ENCODE measurements at regions of chr6 and their contacts with region 1.

Region 1: DNA sequence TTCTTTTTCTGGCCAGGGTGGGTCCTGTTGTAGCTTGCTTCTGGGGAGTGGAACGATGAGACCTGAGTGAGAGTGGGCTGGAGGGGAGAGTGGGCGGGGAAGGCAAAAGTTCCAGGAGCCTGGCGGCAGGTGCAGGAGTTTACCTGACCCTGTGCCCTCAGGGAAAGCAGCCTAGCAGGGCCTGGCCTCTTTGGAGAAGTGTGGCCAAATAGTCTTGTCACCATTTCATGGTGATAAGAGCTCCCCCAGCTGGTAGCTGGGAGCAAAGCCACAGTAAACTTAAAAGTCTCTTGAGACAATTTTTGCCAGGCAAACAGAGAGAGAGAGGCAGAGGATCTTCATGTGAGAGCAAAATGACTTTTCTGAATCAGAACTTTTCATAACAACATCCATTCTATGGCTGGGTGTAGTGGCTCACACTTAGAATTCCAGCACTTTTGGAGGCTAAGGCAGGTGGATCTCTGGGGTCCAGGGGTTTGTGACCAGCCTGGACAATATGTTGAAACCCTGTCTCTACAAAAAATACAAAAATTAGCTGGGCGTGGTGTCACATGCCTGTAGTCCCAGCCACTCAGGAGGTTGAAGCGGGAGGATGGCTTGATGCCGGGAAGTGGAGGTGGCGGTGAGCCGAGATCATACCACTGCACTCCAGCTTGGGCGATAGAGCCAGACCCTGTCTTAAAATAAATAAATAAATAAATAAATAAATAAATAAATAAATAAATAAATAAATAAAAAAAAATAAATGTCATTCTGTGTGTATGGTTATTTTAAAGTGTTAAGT is 161.8 kb upstream of the SCGN start:
- DNase-seq: peak; percentile 48
- H3K4me3 ChIP-seq: peak overlapping the region in 1 of 2 experiments; percentile 16; a peak in 1 of 4 replicates
- H3K27ac ChIP-seq: no peak overlapping the region; a peak in 1 of 4 replicates
- H3K4me1 ChIP-seq: peaks cover 0 to 11% of the 10 kb centered on the region in 2 experiments; a peak in 2 of 4 replicates
- H3K27me3 ChIP-seq: no peaks in the 10 kb centered on the region
- CTCF ChIP-seq: peak; percentile 86
- EP300 ChIP-seq: no peak
- RAD21 ChIP-seq: peak; percentile 93

Region 2: GRCh38 chr6:25112207-25112874 is 377.9 kb before region 1 on chr6:
- CTCF ChIA-PET with region 1: no interaction called
- POLR2A ChIA-PET with region 1: no interaction called
- DNase-seq: no peak
- H3K4me3 ChIP-seq: no peak overlapping the region
- H3K27ac ChIP-seq: no peak overlapping the region
- H3K4me1 ChIP-seq: no peaks in the 10 kb centered on the region; a peak in 1 of 4 replicates
- H3K27me3 ChIP-seq: no peaks in the 10 kb centered on the region
- CTCF ChIP-seq: no peak
- EP300 ChIP-seq: no peak
- RAD21 ChIP-seq: no peak

Region 3: DNA sequence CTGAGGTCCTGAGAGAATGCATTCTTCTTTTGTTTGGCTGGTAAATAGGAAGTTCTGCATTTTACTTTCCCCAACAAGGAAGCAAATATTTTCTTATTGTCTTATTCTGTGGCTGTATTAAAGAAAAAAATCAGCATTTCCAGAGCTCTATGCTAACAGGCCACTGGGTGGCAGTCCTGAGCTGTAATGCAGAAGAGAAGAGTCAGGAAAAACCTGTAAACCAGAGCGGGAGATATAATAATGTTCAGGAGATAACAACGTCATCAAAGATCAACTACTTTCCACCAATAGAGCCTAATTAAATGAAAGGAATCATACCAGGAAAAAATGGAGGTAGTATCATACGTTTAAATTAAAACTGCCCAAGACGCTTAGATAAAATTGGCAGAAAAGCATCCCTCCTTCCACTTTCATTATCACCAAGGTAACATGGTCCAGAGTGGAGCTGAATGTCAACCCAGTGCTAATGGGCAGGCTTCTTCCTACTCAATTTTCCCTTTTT is 266.7 kb before region 1 on chr6:
- CTCF ChIA-PET with region 1: interaction called, 28 read pairs
- POLR2A ChIA-PET with region 1: interaction called, 4 read pairs
- DNase-seq: peak; percentile 64
- H3K4me3 ChIP-seq: peak overlapping the region; percentile 21 to 39
- H3K27ac ChIP-seq: peak overlapping the region in 1 of 2 experiments; percentile 39; a peak in 1 of 4 replicates
- H3K4me1 ChIP-seq: peaks cover 3 to 29% of the 10 kb centered on the region in 2 experiments; a peak in 3 of 4 replicates
- H3K27me3 ChIP-seq: no peaks in the 10 kb centered on the region
- CTCF ChIP-seq: peak; percentile 99
- EP300 ChIP-seq: no peak
- RAD21 ChIP-seq: peak; percentile 95

Region 4: DNA sequence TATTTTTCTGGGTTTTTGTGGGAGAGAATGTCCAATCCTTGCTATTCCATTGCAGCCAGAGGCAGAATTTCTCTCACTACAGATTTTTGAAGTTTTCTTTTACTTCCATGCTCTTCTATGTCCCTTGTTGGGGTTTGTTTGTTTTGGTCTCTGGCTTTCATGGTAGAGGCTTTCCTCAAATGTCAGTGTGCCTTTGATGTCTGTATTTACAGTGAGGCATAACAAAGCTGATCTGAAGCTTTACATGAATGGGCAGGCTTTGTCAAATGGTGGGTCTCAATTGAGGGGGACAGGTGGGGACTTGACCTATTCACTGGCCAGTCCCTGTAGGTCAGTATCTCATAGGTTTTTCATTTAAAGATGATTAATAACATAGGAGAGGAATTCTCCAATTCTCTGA is 219.7 kb before region 1 on chr6:
- CTCF ChIA-PET with region 1: interaction called, 49 read pairs
- POLR2A ChIA-PET with region 1: interaction called, 5 read pairs
- DNase-seq: no peak
- H3K4me3 ChIP-seq: no peak overlapping the region
- H3K27ac ChIP-seq: no peak overlapping the region
- H3K4me1 ChIP-seq: no peaks in the 10 kb centered on the region
- H3K27me3 ChIP-seq: no peaks in the 10 kb centered on the region
- CTCF ChIP-seq: no peak
- EP300 ChIP-seq: no peak
- RAD21 ChIP-seq: no peak

Region 5: DNA sequence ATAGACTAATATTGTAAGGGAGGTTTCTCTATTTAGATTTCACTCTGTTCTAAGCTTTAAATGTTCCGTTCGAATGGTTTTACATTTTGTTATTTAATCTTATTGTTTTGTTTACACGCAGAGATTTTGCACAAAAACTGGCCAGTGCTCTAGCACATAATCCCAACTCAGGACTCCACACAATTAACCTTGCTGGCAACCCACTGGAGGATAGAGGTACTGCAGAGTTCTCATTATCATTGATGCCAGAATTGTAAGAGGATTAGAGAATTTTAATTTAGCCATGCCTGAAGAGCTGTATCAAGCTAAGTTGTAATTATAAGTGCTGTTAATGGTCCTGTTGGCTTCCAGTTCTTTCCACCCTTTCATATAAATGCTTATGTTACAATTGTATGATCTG is 17.9 kb before region 1 on chr6:
- CTCF ChIA-PET with region 1: interaction called, 10 read pairs
- POLR2A ChIA-PET with region 1: no interaction called
- DNase-seq: peak; percentile 22
- H3K4me3 ChIP-seq: no peak overlapping the region
- H3K27ac ChIP-seq: no peak overlapping the region
- H3K4me1 ChIP-seq: no peaks in the 10 kb centered on the region
- H3K27me3 ChIP-seq: no peaks in the 10 kb centered on the region
- CTCF ChIP-seq: peak; percentile 26; the same call in 1 of the 2 replicates
- EP300 ChIP-seq: no peak
- RAD21 ChIP-seq: no peak

Region 6: DNA sequence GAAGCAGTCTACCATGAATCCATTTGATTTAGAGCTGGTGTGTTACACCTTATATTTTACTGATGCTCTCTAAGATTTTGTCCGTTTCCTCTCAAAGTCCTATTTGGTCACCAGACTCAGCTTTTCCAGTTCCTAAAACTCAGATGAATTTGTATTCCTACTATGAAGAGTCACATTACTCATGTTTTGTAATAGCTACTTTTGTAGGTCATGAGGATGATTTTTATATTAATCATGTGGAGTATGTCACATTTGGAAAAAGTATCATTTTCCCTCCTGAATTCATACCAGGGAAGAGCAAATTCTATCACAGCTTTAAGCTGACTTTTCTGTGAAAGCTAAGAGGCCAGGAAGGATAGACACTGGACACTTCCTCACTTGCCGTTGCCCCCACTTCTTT is 21.2 kb after region 1 on chr6:
- CTCF ChIA-PET with region 1: interaction called, 16 read pairs
- POLR2A ChIA-PET with region 1: no interaction called
- DNase-seq: no peak
- H3K4me3 ChIP-seq: no peak overlapping the region
- H3K27ac ChIP-seq: 0 out of 4 replicates have a peak overlapping the region, but pooled peaks of 1 of the 2 experiments have one; percentile 14
- H3K4me1 ChIP-seq: peaks cover 0 to 18% of the 10 kb centered on the region in 2 experiments; a peak in 2 of 4 replicates
- H3K27me3 ChIP-seq: no peaks in the 10 kb centered on the region
- CTCF ChIP-seq: no peak
- EP300 ChIP-seq: no peak
- RAD21 ChIP-seq: no peak

Measured in SK-N-SH (cell line).